Body of pancreas (tissue), 4 donors: ENCODE measurements at regions of chr20 and their contacts with region 1.

Region 1: GRCh38 chr20:14855171-14855570 is 517.8 kb upstream of the FLRT3 start:
- DNase-seq: no peak
- ATAC-seq: no peak
- H3K4me3 ChIP-seq: no peak overlapping the region
- H3K27ac ChIP-seq: no peak overlapping the region
- H3K4me1 ChIP-seq: no peaks in the 10 kb centered on the region
- H3K27me3 ChIP-seq: no peaks in the 10 kb centered on the region
- CTCF ChIP-seq: no peak
- POLR2A ChIP-seq: no peak

Region 2: DNA sequence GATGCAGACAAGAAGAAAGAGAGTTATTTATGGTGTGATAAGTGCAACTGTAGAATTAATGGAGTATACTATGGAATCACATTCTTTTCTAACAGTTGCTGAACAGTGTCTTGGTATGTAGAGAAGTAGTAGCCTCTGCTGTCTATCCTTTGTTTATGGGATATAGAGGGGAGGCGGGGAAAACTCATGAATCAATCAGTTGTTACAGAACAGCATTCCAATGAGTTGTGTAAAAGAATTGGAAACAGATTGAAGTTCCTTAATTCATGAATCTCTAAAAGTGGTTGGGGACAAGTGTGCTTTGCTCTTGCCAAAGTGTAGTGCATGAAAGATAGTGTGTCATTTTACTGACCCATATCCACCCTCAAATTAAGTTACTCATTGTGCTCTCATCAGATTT is 595.5 kb before region 1 on chr20:
- intact Hi-C with region 1: loop called (anchors 5 kb)
- DNase-seq: no peak
- ATAC-seq: no peak
- H3K4me3 ChIP-seq: no peak overlapping the region
- H3K27ac ChIP-seq: no peak overlapping the region
- H3K4me1 ChIP-seq: no peaks in the 10 kb centered on the region
- H3K27me3 ChIP-seq: no peaks in the 10 kb centered on the region
- CTCF ChIP-seq: no peak
- POLR2A ChIP-seq: no peak

Region 3: DNA sequence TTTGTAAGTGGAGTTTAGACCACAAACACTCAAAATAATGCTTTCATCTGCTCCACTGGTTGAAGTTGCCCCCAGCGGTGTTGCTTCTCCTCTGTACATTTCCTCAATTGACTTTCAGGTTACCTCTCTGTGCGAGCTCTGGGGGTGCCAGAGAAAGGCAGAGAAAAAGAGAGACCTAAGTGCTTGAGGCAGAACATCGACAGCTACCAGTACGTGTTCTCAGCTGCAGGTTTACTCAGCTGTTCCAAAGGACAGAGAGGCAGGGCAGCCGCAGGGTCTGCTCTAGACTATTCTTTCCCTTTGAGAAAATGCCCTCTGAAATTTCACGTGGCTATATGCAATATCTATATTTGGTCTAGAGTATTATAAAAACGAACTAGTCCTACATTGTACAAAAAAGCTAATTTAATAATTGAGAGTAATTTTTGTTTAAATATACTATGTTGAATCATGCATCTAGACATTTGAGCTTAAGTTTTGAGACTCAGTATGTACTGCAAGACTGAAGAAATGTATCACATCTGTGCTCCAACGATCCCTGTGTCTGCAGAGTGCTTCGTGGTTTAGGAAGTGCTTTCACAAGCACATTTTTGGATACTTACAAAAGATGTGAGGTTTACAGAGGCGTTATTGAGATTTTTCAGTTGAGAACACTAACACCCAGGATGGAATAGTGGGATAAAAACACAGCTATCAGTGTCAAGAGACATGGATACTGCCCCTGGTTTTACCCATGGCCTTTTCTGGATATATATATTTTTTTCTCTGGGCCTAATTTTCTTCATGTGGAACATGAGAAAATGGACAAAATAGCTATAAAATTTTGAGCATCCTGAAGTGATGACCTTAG is 64.2 kb before region 1 on chr20:
- intact Hi-C with region 1: no loop called
- DNase-seq: peak in 3 of 4 donors; percentile 3 to 29 (median 28)
- ATAC-seq: no peak
- H3K4me3 ChIP-seq: no peak overlapping the region
- H3K27ac ChIP-seq: no peak overlapping the region
- H3K4me1 ChIP-seq: no peaks in the 10 kb centered on the region
- H3K27me3 ChIP-seq: no peaks in the 10 kb centered on the region
- CTCF ChIP-seq: no peak
- POLR2A ChIP-seq: no peak

Region 4: DNA sequence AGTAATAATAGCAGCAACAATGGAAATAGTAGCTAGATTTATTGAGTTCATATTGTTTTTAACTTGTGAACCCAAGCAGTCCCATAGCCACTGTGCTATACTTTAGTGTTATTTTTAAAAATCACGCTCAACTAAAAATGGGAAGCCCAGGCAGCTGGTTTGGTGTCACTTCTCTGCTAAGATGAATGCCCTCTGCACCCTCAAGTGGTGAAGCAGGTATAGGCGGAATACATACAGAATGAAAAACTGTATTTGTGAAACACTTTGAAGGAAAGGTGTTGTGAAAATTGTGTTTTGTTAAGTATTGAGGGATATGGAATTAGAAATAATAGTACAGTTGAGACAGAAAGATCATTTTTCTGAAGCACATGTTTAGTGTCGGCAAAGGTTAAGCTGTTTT is 109.5 kb after region 1 on chr20:
- intact Hi-C with region 1: no loop called
- DNase-seq: no peak
- ATAC-seq: no peak
- H3K4me3 ChIP-seq: no peak overlapping the region
- H3K27ac ChIP-seq: no peak overlapping the region
- H3K4me1 ChIP-seq: no peaks in the 10 kb centered on the region
- H3K27me3 ChIP-seq: no peaks in the 10 kb centered on the region
- CTCF ChIP-seq: no peak
- POLR2A ChIP-seq: no peak